Activated CD4-positive, alpha-beta T cell treated with anti-CD3 and anti-CD28 coated beads for 36 hours (primary cell): ENCODE measurements at regions of chr9 and their contacts with region 1.

Region 1: DNA sequence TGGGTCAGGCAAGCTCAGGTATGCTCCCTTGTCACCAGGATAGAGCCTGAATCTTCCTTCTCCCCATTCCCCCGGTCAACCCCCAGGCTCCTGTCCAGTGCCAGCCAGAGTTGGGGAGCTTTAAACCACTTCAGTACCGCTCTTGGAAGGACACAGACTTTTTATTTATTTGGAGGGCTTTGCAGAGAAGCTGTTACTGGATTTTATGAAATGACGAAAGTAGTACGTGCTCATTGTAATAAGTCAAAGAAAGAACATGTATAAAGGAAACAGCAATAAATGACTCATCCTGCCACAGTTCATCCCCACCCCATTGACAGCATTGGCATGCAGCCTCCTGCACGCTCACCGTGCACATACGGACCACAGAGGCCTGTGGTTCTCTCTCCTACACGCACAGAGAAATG is 230.3 kb downstream of the AUH start:
- DNase-seq: peak; percentile 91
- ATAC-seq: peak; percentile 98
- H3K4me3 Mint-ChIP-seq: peak overlapping the region; percentile 3
- H3K27ac Mint-ChIP-seq: peak overlapping the region; percentile 94
- H3K4me1 Mint-ChIP-seq: peaks cover 29% of the 10 kb centered on the region
- H3K27me3 Mint-ChIP-seq: no peaks in the 10 kb centered on the region

Region 2: GRCh38 chr9:91047993-91048607 is 83.3 kb before region 1 on chr9:
- CTCF ChIA-PET with region 1: no interaction called
- POLR2A ChIA-PET with region 1: no interaction called
- intact Hi-C with region 1: loop called (anchors 1 kb)
- DNase-seq: peak; percentile 75
- ATAC-seq: peak; percentile 83
- H3K4me3 Mint-ChIP-seq: peak overlapping the region; percentile 46
- H3K27ac Mint-ChIP-seq: peak overlapping the region; percentile 96
- H3K4me1 Mint-ChIP-seq: peaks cover 82% of the 10 kb centered on the region
- H3K27me3 Mint-ChIP-seq: peaks cover 23% of the 10 kb centered on the region

Region 3: DNA sequence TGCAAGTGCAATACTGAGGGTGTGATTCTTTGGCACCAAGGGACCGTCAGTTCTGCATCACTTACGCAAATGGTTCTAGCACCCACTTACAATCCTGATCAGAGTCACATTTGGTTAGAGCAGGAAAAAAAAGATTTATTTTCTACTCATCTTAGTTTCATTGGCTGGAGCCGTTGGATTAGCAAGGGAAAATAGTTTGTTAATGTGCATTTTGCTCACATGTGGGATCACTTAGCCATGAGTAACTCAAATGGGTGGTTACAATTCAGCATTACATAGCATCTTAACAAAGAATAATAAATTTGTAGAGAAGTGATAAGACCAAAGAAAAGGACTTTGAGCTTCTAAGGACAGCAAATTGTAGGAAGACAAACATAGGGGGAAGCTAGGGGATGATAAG is 13.3 kb after region 1 on chr9:
- CTCF ChIA-PET with region 1: interaction called, 10 read pairs
- POLR2A ChIA-PET with region 1: interaction called, 29 read pairs
- intact Hi-C with region 1: loop called (anchors 1 kb)
- DNase-seq: no peak
- ATAC-seq: no peak
- H3K4me3 Mint-ChIP-seq: no peak overlapping the region
- H3K27ac Mint-ChIP-seq: peak overlapping the region; percentile 97
- H3K4me1 Mint-ChIP-seq: peaks cover 46% of the 10 kb centered on the region
- H3K27me3 Mint-ChIP-seq: no peaks in the 10 kb centered on the region

Region 4: DNA sequence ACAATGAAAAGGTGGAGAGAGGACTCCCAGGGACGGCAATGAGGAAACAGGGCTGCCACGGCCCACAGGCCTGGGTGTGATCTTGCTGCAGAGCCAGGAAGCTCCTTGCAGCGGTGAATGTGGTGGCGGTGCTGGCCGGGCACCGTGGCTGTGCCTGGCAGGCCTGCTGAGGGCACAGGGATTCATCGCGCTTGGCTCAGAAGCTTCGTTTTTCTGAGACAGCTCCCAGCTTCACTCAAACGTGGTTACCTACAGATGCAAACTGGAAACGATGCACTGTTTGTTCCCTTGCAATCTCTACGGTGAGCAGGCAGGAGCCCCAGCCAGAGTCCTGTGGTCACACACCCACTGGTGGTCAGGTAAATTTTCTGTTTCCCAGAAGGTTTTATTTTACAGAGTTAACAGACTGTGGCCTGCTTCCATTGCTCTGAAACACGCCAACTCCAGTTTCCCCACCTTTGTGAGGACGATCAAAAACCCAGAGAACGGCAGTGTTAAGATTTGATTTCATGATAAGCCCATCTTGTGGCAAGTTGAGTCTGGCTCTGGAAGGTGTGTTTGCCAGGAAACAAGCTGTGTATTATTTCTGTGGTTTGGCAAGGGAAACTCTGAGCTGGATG is 46.3 kb after region 1 on chr9:
- CTCF ChIA-PET with region 1: no interaction called
- POLR2A ChIA-PET with region 1: interaction called, 3 read pairs
- intact Hi-C with region 1: loop called in 1 of 2 experiments (anchors 1 kb)
- DNase-seq: peak; percentile 79
- ATAC-seq: peak; percentile 73
- H3K4me3 Mint-ChIP-seq: peak overlapping the region; percentile 22
- H3K27ac Mint-ChIP-seq: peak overlapping the region; percentile 99
- H3K4me1 Mint-ChIP-seq: peaks cover 64% of the 10 kb centered on the region
- H3K27me3 Mint-ChIP-seq: no peaks in the 10 kb centered on the region

Region 5: DNA sequence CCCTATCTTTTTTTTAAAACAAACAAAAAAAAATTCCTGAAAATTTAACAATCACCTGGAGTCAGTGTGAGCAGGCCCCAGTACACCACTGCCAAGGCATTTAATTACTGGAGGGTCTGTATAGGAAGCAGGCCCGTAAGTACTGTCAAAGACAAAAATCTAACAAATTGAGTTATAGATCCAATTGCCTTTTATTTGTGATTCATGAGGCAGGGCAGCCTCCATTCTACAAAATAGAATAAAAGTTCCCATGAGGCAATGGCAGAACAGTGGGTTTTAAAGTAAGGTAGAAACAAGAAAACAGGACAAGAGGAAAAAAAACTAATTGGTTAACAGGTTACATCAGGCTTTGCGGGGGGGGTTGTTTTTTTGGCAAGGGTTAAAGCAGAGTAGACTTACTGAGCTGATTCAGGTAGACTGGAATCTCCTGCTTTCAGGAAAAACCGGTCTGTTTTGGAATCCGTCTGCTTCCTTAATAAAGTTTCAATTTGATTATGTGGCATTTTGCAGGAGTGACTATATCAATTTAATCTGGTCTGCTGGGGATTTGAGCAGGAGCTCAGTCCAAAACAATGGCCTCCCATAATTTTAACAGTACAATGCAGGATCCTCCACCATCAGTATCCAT is 181.4 kb after region 1 on chr9:
- CTCF ChIA-PET with region 1: no interaction called
- POLR2A ChIA-PET with region 1: no interaction called
- intact Hi-C with region 1: no loop called
- DNase-seq: no peak
- ATAC-seq: no peak
- H3K4me3 Mint-ChIP-seq: no peak overlapping the region
- H3K27ac Mint-ChIP-seq: no peak overlapping the region
- H3K4me1 Mint-ChIP-seq: peaks cover 9% of the 10 kb centered on the region
- H3K27me3 Mint-ChIP-seq: no peaks in the 10 kb centered on the region